MCF 10A (cell line): ENCODE measurements at regions of chr11 and their contacts with region 1.

Region 1: DNA sequence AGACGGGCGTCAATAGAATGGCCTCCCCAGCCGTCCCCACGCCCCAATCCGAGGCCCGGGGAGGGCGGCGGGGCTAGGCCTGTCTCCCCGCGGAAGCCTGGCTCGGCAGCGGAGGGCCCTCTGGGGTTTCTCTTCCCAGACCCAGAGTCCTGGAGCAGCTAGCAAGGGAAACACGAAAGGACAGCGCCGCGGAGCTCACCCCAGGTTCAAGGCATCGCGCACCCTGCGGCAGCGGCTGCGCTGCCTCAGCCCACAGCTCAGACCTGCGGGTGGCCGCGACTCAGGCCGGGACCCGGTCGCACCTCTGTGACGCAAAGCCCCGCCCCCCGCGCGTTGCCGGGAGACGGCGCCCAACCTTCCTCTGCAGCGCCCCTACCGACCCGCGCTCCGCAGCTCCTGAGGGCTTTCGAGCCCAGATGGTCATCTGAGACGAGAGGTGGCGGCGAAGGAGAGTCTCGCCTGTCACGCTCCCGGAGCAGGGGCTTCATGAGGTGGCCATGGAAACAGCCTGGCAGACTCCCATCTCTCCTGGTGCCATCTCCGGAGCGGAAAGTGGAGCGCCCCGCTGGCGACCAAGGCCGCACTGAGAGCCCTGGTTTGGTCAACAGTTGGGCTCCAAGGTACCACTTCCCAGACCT is at the start of gene RNF141:
- DNase-seq: peak; percentile 93
- H3K4me3 Mint-ChIP-seq: peak within 1 kb of the TSS; percentile 81
- H3K27ac Mint-ChIP-seq: peak within 1 kb of the TSS; percentile 94
- H3K4me1 Mint-ChIP-seq: peaks cover 13% of the 10 kb centered on the region
- H3K27me3 Mint-ChIP-seq: no peaks in the 10 kb centered on the region
- CTCF ChIP-seq: peak; percentile 59
- total RNA-seq, gene RNF141: 28.4 and 41.8 TPM in 2 replicates

Region 2: GRCh38 chr11:10413268-10413667 is 127.8 kb before region 1 on chr11:
- CTCF ChIA-PET with region 1: interaction called, 15 read pairs
- POLR2A ChIA-PET with region 1: interaction called, 9 read pairs
- intact Hi-C with region 1: no loop called
- DNase-seq: peak; percentile 44
- H3K4me3 Mint-ChIP-seq: no peak overlapping the region
- H3K27ac Mint-ChIP-seq: no peak overlapping the region
- H3K4me1 Mint-ChIP-seq: peaks cover 5% of the 10 kb centered on the region
- H3K27me3 Mint-ChIP-seq: no peaks in the 10 kb centered on the region
- CTCF ChIP-seq: no peak

Region 3: GRCh38 chr11:10505278-10506007 is 35.6 kb before region 1 on chr11:
- CTCF ChIA-PET with region 1: interaction called, 5 read pairs
- POLR2A ChIA-PET with region 1: interaction called, 17 read pairs
- intact Hi-C with region 1: no loop called
- DNase-seq: no peak
- H3K4me3 Mint-ChIP-seq: no peak overlapping the region
- H3K27ac Mint-ChIP-seq: peak overlapping the region; percentile 51
- H3K4me1 Mint-ChIP-seq: peaks cover 6% of the 10 kb centered on the region
- H3K27me3 Mint-ChIP-seq: no peaks in the 10 kb centered on the region
- CTCF ChIP-seq: no peak

Region 4: DNA sequence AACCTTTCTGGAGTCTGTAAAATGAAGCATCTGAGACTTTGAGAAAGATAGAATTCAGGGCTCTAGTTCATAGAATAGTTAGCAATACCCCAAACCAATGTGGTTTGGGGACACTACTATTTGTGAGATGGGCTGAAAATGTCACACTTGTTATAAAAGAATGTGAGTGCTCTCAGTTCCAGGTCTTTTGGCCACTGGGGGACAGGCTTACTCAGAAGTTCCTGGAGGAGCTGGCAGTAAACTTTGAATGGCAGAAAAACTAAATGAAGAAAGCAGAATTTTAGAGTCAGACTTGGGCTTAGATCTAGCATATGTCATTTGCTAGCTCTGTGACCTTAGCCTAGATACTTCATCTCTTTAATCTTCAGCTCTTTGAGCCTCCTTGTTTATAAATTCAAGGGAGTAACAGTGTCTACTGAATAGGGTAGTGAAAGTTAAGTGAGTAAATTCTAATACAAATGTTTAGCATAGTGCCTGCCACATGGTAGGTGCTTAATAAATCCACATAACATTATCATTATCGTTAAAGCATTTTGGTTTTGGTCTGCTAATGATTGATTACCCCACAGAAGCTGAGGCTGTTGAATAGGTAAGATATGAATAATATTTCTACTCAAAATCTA is 23.8 kb after region 1 on chr11:
- CTCF ChIA-PET with region 1: interaction called, 9 read pairs
- POLR2A ChIA-PET with region 1: interaction called, 13 read pairs
- intact Hi-C with region 1: no loop called
- DNase-seq: no peak
- H3K4me3 Mint-ChIP-seq: no peak overlapping the region
- H3K27ac Mint-ChIP-seq: no peak overlapping the region
- H3K4me1 Mint-ChIP-seq: peaks cover 5% of the 10 kb centered on the region
- H3K27me3 Mint-ChIP-seq: no peaks in the 10 kb centered on the region
- CTCF ChIP-seq: peak; percentile 12

Region 5: GRCh38 chr11:10597877-10598351 is 56.9 kb after region 1 on chr11:
- CTCF ChIA-PET with region 1: interaction called, 5 read pairs
- POLR2A ChIA-PET with region 1: interaction called, 32 read pairs
- intact Hi-C with region 1: no loop called
- DNase-seq: no peak
- H3K4me3 Mint-ChIP-seq: no peak overlapping the region
- H3K27ac Mint-ChIP-seq: no peak overlapping the region
- H3K4me1 Mint-ChIP-seq: peaks cover 30% of the 10 kb centered on the region
- H3K27me3 Mint-ChIP-seq: no peaks in the 10 kb centered on the region
- CTCF ChIP-seq: no peak

Region 6: GRCh38 chr11:10646005-10646404 is 105.0 kb after region 1 on chr11:
- CTCF ChIA-PET with region 1: interaction called, 17 read pairs
- POLR2A ChIA-PET with region 1: interaction called, 9 read pairs
- intact Hi-C with region 1: no loop called
- DNase-seq: no peak
- H3K4me3 Mint-ChIP-seq: no peak overlapping the region
- H3K27ac Mint-ChIP-seq: no peak overlapping the region
- H3K4me1 Mint-ChIP-seq: peaks cover 9% of the 10 kb centered on the region
- H3K27me3 Mint-ChIP-seq: no peaks in the 10 kb centered on the region
- CTCF ChIP-seq: no peak